Left ventricle myocardium inferior (tissue), 1 donor: ENCODE measurements at regions of chr6 and their contacts with region 1.

Region 1: GRCh38 chr6:121666814-121667213 is 231.4 kb downstream of the GJA1 start:
- DNase-seq: no peak
- H3K4me3 ChIP-seq: no peak overlapping the region
- H3K27ac ChIP-seq: peak overlapping the region; percentile 71
- H3K4me1 ChIP-seq: peaks cover 22% of the 10 kb centered on the region
- H3K27me3 ChIP-seq: no peaks in the 10 kb centered on the region
- CTCF ChIP-seq: no peak

Region 2: GRCh38 chr6:121826156-121826810 is 159.5 kb after region 1 on chr6:
- intact Hi-C with region 1: loop called (anchors 10 kb)
- DNase-seq: no peak
- H3K4me3 ChIP-seq: no peak overlapping the region
- H3K27ac ChIP-seq: peak overlapping the region; percentile 31
- H3K4me1 ChIP-seq: peaks cover 42% of the 10 kb centered on the region
- H3K27me3 ChIP-seq: no peaks in the 10 kb centered on the region
- CTCF ChIP-seq: no peak